Cardiac septum (tissue), 1 donor: ENCODE measurements at regions of chr12 and their contacts with region 1.

Region 1: GRCh38 chr12:97308576-97309198 is 153.9 kb upstream of the RMST start:
- DNase-seq: no peak

Region 2: GRCh38 chr12:96587691-96588090 is 721.0 kb before region 1 on chr12:
- intact Hi-C with region 1: loop called (anchors 10 kb)
- DNase-seq: no peak

Region 3: GRCh38 chr12:96985480-96986362 is 323.0 kb before region 1 on chr12:
- intact Hi-C with region 1: loop called (anchors 10 kb)
- DNase-seq: no peak

Region 4: GRCh38 chr12:97148941-97149559 is 159.6 kb before region 1 on chr12:
- intact Hi-C with region 1: loop called (anchors 2 kb)
- DNase-seq: peak; percentile 75

Region 5: DNA sequence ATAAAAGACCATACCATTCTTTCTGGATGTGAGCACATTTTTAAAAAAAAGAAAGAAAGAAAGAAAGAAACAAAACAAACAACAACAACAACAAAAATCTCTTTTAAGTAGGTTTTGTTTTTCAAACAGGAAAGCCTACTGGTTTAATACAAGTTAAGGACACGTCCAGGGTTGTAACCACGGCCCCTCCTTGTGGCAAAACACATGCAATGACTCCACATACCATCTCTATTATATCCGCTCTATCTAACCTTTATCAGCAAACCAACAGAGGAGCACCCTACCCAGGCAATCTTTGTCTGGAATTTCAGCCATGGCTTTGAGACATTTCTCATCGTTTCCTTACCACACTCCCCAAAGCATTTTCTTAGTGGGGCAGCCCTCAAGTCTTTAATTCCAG is 846.2 kb after region 1 on chr12:
- intact Hi-C with region 1: no loop called
- DNase-seq: no peak